Tibial artery (tissue), 4 donors: ENCODE measurements at regions of chr3 and their contacts with region 1.

Region 1: GRCh38 chr3:73508330-73508954 is 116.3 kb downstream of the PDZRN3 start:
- DNase-seq: peak in 1 of 2 donors; percentile 54
- H3K4me3 ChIP-seq: no peak overlapping the region
- H3K27ac ChIP-seq: peak overlapping the region; percentile 78 to 93
- H3K4me1 ChIP-seq: peaks cover 0 to 94% (median 40%) of the 10 kb centered on the region in 4 donors
- H3K27me3 ChIP-seq: no peaks in the 10 kb centered on the region
- CTCF ChIP-seq: peak; percentile 77 to 79

Region 2: GRCh38 chr3:73448761-73449301 is 59.6 kb before region 1 on chr3:
- intact Hi-C with region 1: no loop called
- DNase-seq: no peak
- H3K4me3 ChIP-seq: no peak overlapping the region
- H3K27ac ChIP-seq: no peak overlapping the region
- H3K4me1 ChIP-seq: peaks cover 0 to 81% (median 17%) of the 10 kb centered on the region in 4 donors
- H3K27me3 ChIP-seq: no peaks in the 10 kb centered on the region
- CTCF ChIP-seq: no peak

Region 3: GRCh38 chr3:73624821-73625665 is 116.6 kb after region 1 on chr3 and contains the start of gene PDZRN3:
- intact Hi-C with region 1: loop called (anchors 5 kb)
- DNase-seq: peak in 1 of 2 donors; percentile 40
- H3K4me3 ChIP-seq: peak within 1 kb of the TSS; percentile 80 to 86
- H3K27ac ChIP-seq: peak within 1 kb of the TSS; percentile 88 to 93
- H3K4me1 ChIP-seq: peaks cover 0 to 31% (median 21%) of the 10 kb centered on the region in 4 donors
- H3K27me3 ChIP-seq: no peaks in the 10 kb centered on the region
- CTCF ChIP-seq: no peak

Region 4: GRCh38 chr3:73805435-73805834 is 297.0 kb after region 1 on chr3:
- intact Hi-C with region 1: loop called (anchors 10 kb)
- DNase-seq: peak; percentile 87 to 92
- H3K4me3 ChIP-seq: no peak overlapping the region
- H3K27ac ChIP-seq: peak overlapping the region; percentile 78 to 89
- H3K4me1 ChIP-seq: peaks cover 0 to 48% (median 15%) of the 10 kb centered on the region in 4 donors
- H3K27me3 ChIP-seq: no peaks in the 10 kb centered on the region
- CTCF ChIP-seq: no peak

Region 5: DNA sequence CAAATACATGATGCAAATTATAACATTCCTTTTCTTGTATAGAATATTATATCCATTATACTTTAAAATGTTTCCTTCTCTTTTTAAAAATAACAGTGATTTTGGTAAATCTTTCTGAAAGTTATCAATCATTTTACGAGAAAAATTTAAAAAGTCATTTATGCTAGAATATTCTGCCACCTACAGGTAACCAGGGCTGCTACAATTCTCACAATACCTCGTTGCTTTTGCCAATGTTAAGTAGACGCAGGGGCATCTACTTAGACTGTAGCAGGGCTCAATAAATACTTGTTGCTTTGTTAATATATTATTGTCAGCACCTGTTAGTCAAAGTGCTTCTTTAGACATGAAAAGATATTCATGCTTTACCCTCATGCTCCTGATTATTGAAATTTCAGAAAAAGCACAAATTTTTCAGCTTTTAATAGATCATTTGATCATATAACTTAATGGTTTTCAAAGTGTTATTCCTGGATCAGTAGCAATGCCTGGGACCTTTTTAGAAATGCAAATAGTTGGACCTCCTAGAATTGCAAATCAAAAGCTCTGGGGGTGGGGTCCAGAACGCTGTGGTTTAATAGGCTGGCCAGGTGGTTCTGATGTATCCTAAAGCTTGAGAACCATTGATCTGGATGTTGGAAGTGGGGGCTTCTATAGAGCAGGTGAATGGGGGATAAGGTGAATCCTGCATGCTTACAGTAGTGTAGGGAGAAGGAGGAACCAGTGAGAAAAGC is 339.9 kb after region 1 on chr3:
- intact Hi-C with region 1: loop called (anchors 5 kb)
- DNase-seq: no peak
- H3K4me3 ChIP-seq: no peak overlapping the region
- H3K27ac ChIP-seq: no peak overlapping the region
- H3K4me1 ChIP-seq: peaks cover 0 to 3% (median 0%) of the 10 kb centered on the region in 4 donors
- H3K27me3 ChIP-seq: no peaks in the 10 kb centered on the region
- CTCF ChIP-seq: peak; percentile 69 to 74